T-cell (primary cell): ENCODE measurements at regions of chr2 and their contacts with region 1.

Region 1: DNA sequence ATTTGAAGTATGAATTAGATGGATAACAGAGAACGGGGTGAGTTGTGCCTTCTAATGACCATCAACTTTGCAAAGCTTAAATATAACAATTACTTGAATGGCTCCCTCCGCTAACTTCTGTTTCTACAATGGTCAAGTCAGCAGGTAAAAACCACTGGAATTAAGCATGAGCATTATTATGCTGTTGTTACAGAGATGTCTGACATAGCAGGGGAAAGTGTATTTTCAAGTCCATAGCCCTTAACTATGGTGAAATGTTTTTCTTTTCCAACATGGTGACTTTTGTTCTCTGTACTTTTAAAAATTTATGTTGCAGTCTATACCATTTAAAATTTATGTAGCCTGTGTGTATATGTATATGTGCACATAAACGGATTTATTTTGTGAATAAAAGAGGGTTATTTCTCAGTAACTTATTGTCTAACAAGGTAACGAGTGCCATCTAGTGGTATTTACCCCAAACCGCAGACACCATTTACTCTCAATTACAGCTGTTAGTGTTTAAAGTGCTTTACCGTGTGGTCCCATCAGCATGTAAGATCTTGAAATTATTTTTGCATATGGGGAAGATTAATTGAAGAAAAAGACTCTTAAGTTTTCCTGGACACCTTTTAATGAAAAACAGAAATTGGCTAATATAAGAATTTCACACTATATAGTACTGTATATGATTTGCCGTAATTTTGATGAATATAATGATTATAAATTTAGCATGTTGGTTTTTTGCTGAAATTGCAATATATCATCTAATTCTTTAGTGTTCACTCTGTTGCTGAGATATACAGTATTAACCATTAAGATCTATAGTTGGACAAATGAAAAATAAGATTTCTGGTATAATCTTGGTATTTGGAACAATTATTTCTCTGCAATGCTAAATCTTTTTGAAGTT is 78.2 kb downstream of the UBE2E3 start:
- DNase-seq: peak in 24 of 35 experiments; percentile 2 to 70 (median 22)
- ATAC-seq: peak in 2 of 4 experiments; percentile 48 to 50
- H3K4me3 ChIP-seq: no peak overlapping the region
- H3K4me3 Mint-ChIP-seq: no peak overlapping the region
- H3K27ac ChIP-seq: no peak overlapping the region
- H3K27ac Mint-ChIP-seq: no peak overlapping the region
- H3K4me1 ChIP-seq: peaks cover 0 to 1% of the 10 kb centered on the region in 2 experiments
- H3K4me1 Mint-ChIP-seq: peaks cover 0 to 3% (median 3%) of the 10 kb centered on the region in 3 donors
- H3K27me3 ChIP-seq: no peaks in the 10 kb centered on the region
- H3K27me3 Mint-ChIP-seq: no peaks in the 10 kb centered on the region

Region 2: DNA sequence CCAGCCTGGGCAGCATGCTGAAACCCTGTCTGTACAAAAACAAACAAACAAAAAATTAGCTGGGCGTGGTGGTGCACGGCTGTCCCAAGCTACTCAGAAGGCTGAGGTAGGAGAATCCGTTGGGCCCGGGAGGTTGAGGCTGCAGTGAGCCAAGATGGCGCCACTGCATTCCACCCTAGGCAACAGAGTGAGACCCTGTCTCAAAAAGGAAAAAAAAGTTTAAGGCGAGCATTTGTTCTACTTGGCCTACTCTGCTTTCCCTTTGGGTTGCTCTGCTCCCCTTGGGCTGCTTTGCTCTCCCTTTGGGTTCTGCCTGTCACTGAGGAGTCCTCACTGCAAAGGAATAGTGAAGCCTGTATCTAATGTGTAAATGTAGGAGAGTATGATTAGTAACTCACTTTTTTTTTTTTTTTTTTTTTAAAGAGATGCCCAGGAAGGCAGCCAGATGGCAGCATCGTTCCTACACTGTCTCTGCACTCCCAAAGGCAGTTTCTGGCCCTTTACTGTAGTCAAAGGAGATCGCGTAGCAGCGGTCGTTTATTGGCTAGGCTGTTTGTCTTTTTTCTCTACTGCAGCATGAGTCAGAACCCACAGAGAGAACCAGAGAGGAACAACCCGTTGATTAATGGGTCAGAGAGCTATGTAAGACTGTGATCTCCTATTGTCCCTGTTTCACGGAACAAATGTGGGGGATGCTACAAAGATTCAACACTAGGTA is 933.2 kb before region 1 on chr2:
- CTCF ChIA-PET with region 1: interaction called, 10 to 73 read pairs
- POLR2A ChIA-PET with region 1: no interaction called
- DNase-seq: peak in 32 of 35 experiments; percentile 0 to 60 (median 22)
- ATAC-seq: peak; percentile 80 to 90 (median 87)
- H3K4me3 ChIP-seq: no peak overlapping the region
- H3K4me3 Mint-ChIP-seq: no peak overlapping the region
- H3K27ac ChIP-seq: no peak overlapping the region
- H3K27ac Mint-ChIP-seq: no peak overlapping the region
- H3K4me1 ChIP-seq: no peaks in the 10 kb centered on the region
- H3K4me1 Mint-ChIP-seq: peaks cover 5 to 6% (median 6%) of the 10 kb centered on the region in 3 donors
- H3K27me3 ChIP-seq: peaks cover 0 to 5% of the 10 kb centered on the region in 2 experiments
- H3K27me3 Mint-ChIP-seq: peaks cover 10% of the 10 kb centered on the region in 2 donors

Region 3: DNA sequence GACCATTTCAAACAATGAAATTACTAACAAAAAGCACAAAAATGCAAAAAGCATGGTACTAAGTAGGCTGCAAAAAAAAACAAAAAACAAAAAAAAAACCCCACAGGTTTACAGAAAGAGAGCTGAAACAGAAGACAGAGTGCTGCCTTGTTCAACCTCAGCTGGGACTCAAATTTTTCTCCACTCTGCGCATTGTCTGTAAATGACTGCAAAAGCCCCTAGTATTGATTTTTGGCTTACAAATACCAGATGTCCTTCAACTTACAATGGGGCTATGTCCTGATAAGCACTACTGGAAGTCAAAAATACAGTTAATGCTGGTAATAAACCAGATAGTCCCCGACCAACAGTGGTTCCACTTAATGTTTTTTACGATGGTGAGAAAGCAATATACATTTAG is 36.0 kb before region 1 on chr2:
- CTCF ChIA-PET with region 1: interaction called in 1 of 2 experiments, 14 read pairs
- POLR2A ChIA-PET with region 1: no interaction called
- DNase-seq: no peak
- ATAC-seq: no peak
- H3K4me3 ChIP-seq: no peak overlapping the region
- H3K4me3 Mint-ChIP-seq: no peak overlapping the region
- H3K27ac ChIP-seq: no peak overlapping the region
- H3K27ac Mint-ChIP-seq: no peak overlapping the region
- H3K4me1 ChIP-seq: no peaks in the 10 kb centered on the region
- H3K4me1 Mint-ChIP-seq: peaks cover 22 to 38% (median 24%) of the 10 kb centered on the region in 3 donors
- H3K27me3 ChIP-seq: no peaks in the 10 kb centered on the region
- H3K27me3 Mint-ChIP-seq: no peaks in the 10 kb centered on the region